ENCODE measurements at regions of chr6 and their contacts with region 1.

Region 1: GRCh38 chr6:42782622-42783176 is 847 bp downstream of the BICRAL start:
- DNase-seq: no peak
- ATAC-seq: peak; percentile 41
- H3K4me3 ChIP-seq: peak overlapping the region; percentile 86
- H3K27ac ChIP-seq: peak overlapping the region; percentile 99
- H3K4me1 ChIP-seq: peaks cover 31% of the 10 kb centered on the region
- H3K27me3 ChIP-seq: no peaks in the 10 kb centered on the region
- CTCF ChIP-seq: no peak
- EP300 ChIP-seq: no peak
- POLR2A ChIP-seq: no peak
- RAD21 ChIP-seq: no peak

Region 2: GRCh38 chr6:42604150-42604549 is 178.5 kb before region 1 on chr6:
- CTCF ChIA-PET with region 1: no interaction called
- POLR2A ChIA-PET with region 1: no interaction called
- RAD21 ChIA-PET with region 1: no interaction called
- SMC1A ChIA-PET with region 1: no interaction called
- in situ Hi-C with region 1: no loop called
- intact Hi-C with region 1: no loop called
- DNase-seq: no peak
- ATAC-seq: no peak
- H3K4me3 ChIP-seq: no peak overlapping the region
- H3K27ac ChIP-seq: no peak overlapping the region
- H3K4me1 ChIP-seq: no peaks in the 10 kb centered on the region
- H3K27me3 ChIP-seq: no peaks in the 10 kb centered on the region
- CTCF ChIP-seq: no peak
- EP300 ChIP-seq: no peak
- POLR2A ChIP-seq: no peak
- RAD21 ChIP-seq: no peak

Region 3: DNA sequence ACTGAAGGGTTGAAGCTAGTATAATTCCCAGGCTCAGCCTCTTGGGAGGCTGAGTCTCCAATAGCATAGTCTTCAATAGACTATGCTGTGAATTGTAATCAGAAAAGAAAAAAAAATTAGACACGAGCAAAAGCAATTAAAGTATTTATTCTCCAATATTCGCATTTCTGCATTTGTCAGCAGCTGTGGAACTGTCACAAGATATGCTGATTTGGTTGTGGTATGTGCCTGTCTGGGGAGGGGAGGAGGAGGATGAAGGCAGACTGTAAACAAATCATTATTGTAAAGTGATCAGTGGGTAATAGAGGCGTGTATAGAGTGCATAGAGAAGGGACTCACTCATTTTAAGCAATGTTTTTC is 11.0 kb before region 1 on chr6:
- CTCF ChIA-PET with region 1: interaction called, 8 read pairs
- POLR2A ChIA-PET with region 1: interaction called, 28 read pairs
- RAD21 ChIA-PET with region 1: interaction called, 22 read pairs
- SMC1A ChIA-PET with region 1: interaction called, 62 read pairs
- in situ Hi-C with region 1: no loop called
- intact Hi-C with region 1: no loop called
- DNase-seq: no peak
- ATAC-seq: peak; percentile 14; the same call in 1 of the 3 replicates
- H3K4me3 ChIP-seq: peak overlapping the region; percentile 51
- H3K27ac ChIP-seq: peak overlapping the region; percentile 54
- H3K4me1 ChIP-seq: peaks cover 49% of the 10 kb centered on the region
- H3K27me3 ChIP-seq: no peaks in the 10 kb centered on the region
- CTCF ChIP-seq: no peak
- EP300 ChIP-seq: no peak
- POLR2A ChIP-seq: no peak
- RAD21 ChIP-seq: no peak

Region 4: DNA sequence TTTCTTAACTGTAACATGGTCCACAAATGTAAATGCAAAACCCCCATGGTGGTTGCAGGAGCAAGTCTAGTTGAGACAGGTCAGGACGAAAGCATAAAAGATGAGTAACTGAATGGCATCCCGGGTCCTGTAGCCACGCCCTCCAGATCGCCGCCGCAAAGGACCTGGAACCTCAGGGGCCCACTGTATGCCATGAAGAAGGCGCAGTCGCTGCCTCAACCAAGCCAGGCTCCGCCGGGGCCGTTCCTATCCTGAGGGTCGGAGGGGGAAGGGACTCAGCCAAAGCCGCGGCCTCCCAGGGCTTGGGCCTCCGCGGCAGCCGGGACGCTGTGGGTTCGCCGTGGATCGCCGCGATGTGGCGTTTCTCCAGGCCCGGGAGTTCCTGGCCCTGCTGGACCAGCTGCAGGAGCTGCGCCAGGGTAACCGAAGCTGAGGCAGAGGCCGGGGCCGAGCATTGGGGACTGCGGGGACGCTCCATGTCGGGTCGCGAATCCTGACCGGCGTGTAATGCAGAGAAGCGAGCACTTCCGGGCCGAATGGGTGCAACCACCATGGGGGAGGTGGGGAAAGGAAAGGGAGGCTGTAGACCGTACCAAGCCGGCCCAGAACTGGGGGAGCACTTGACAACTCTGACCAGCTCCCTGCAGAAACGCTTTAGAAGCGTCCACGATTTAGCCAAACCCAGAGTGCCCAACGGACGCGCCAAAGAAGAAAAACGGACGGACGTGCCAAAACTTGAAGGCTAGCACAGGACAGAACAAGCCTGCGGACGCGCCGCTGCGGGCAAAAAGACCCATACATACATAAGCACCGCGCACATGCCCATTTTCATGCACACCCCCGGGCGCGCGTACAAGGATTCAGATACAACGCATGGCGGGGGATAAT is 107.9 kb after region 1 on chr6:
- CTCF ChIA-PET with region 1: no interaction called
- POLR2A ChIA-PET with region 1: no interaction called
- RAD21 ChIA-PET with region 1: interaction called, 4 read pairs
- SMC1A ChIA-PET with region 1: no interaction called
- in situ Hi-C with region 1: no loop called
- intact Hi-C with region 1: loop called (anchors 5 kb)
- DNase-seq: peak; percentile 89
- ATAC-seq: peak; percentile 95
- H3K4me3 ChIP-seq: peak overlapping the region; percentile 85
- H3K27ac ChIP-seq: peak overlapping the region; percentile 88
- H3K4me1 ChIP-seq: peaks cover 15% of the 10 kb centered on the region
- H3K27me3 ChIP-seq: no peaks in the 10 kb centered on the region
- CTCF ChIP-seq: no peak
- EP300 ChIP-seq: peak in 1 of 2 experiments; percentile 27; a peak in 1 of 4 replicates
- POLR2A ChIP-seq: peak; percentile 98
- RAD21 ChIP-seq: no peak